Right cardiac atrium (tissue), 5 donors: ENCODE measurements at regions of chr22 and their contacts with region 1.

Region 1: GRCh38 chr22:27668828-27669797 is 132.4 kb downstream of the MN1 start:
- DNase-seq: peak; percentile 85 to 90 (median 87)
- ATAC-seq: peak; percentile 86 to 93
- H3K4me3 ChIP-seq: no peak overlapping the region
- H3K27ac ChIP-seq: peak overlapping the region; percentile 66
- H3K4me1 ChIP-seq: peaks cover 14% of the 10 kb centered on the region
- H3K27me3 ChIP-seq: no peaks in the 10 kb centered on the region

Region 2: DNA sequence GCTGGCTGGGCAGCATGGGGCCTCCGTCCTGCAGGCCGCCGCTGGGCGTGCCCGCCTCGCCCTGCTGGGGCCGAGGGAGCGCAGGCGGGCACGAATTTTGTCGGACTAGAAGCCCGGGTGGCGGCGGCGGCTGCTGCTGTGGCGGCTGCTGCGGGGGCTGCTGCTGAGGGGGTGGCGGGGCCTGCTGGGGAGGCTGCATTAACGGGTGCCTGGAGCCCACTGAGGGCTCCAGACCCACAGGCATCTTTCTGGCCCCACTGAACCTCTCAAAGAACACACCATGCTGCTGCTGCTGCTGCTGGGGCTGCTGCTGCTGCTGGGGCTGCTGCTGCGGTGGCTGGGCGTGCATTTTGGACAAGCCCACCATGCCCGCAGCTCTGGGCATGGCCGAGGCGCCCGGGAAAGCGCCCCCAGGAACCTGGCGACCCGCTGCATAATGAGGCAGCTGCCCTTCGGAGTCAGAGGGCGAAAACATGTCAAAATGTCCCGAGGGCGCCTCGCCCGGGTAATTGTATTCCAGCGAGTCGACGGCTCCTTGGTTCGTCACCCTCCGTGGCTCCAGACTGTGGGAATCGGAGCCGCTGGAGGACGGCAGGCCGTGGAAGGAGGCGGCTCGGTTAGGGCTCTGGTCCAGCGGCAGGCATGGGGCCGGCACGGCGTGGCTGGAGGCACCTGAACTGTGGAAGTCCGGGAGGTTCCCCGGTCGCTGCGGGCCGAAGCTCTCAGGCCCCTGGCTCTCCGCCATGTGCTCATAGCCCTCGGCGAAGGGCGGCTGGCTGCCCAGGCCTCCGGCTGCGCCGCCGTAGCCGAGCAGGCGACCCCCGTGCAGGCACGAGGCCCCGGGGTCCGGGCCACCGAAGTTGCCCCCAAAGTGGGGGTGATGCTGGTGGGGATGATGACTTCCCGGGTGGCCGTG is 130.5 kb after region 1 on chr22:
- intact Hi-C with region 1: loop called in 2 of 4 experiments (anchors 10 kb)
- DNase-seq: peak; percentile 55 to 80 (median 77)
- ATAC-seq: peak; percentile 10 to 15
- H3K4me3 ChIP-seq: peak overlapping the region; percentile 81
- H3K27ac ChIP-seq: no peak overlapping the region
- H3K4me1 ChIP-seq: peaks cover 5% of the 10 kb centered on the region
- H3K27me3 ChIP-seq: no peaks in the 10 kb centered on the region